ENCODE measurements at regions of chr5 and their contacts with region 1.

Region 1: DNA sequence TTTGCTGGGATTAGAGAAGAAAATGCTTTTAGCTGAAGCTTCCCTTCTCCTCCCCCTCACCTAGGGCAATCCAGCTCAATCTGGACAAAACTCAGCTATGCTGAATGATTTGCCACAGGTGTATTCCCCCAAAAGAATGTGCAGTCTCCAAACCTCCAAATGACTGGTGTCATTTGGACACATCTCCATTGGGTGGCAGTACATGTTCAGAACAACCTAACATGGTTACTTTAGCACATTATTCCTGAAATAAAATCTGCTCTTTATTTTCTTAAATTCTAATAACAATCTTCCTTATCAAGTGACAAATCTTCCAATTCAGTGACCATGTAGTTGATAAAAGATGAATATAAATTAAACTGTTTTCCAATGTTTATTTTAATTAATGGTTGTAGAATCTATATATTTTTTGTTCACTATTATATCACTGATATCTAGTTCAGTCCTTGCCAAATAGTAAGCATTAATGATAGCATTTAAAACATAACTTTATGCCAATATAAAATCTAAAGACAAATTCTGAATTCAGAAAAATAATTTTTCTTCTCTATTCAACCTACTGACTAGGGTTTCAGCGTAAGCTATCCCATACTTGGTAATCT is 61.3 kb upstream of the MOCS2 start:
- DNase-seq: peak; percentile 22
- ATAC-seq: peak; percentile 65
- H3K4me3 Mint-ChIP-seq: no peak overlapping the region
- H3K27ac Mint-ChIP-seq: no peak overlapping the region
- H3K4me1 Mint-ChIP-seq: no peaks in the 10 kb centered on the region
- H3K27me3 Mint-ChIP-seq: peaks cover 9% of the 10 kb centered on the region
- CTCF ChIP-seq: peak; percentile 60

Region 2: GRCh38 chr5:53211799-53212198 is 41.0 kb after region 1 on chr5:
- CTCF ChIA-PET with region 1: no interaction called
- POLR2A ChIA-PET with region 1: no interaction called
- intact Hi-C with region 1: no loop called
- DNase-seq: peak; percentile 20
- ATAC-seq: peak; percentile 56
- H3K4me3 Mint-ChIP-seq: no peak overlapping the region
- H3K27ac Mint-ChIP-seq: no peak overlapping the region
- H3K4me1 Mint-ChIP-seq: no peaks in the 10 kb centered on the region
- H3K27me3 Mint-ChIP-seq: peaks cover 9% of the 10 kb centered on the region
- CTCF ChIP-seq: no peak

Region 3: DNA sequence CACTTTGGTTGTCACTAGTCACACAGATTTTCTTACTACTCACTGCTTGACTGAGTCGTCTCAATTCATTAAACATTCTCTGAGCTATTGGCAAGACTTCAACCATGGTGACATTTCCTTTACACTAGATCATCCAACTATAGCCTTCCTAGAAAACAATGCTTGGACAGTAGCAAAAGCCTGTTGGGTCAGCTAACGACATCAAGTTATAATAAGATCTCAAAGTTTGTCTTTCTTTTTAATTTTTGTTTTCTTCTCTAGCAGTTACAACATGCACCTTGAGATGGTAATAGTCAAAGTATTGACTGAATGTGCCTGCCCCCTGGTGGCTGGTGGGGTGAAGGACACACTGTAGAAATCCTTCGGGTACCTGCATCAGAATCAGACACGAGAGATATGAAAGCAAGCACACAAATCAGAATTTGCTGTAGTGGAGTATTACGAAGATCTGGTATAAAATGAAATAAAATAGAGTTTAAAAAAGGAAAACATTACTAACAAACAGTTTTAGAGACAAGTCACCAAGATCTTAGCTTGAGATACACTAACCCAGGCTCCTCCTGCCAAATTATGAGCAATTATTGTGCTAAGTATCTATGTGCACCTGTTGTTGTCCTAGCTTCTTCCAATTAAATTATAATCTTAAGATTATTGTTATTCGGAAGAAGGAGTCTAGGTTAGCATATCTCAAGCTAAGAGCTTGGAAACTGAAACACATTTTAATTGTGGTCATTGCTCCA is 1058.4 kb after region 1 on chr5:
- CTCF ChIA-PET with region 1: interaction called, 13 read pairs
- POLR2A ChIA-PET with region 1: no interaction called
- intact Hi-C with region 1: no loop called
- DNase-seq: peak; percentile 87
- ATAC-seq: peak; percentile 93
- H3K4me3 Mint-ChIP-seq: no peak overlapping the region
- H3K27ac Mint-ChIP-seq: no peak overlapping the region
- H3K4me1 Mint-ChIP-seq: peaks cover 7% of the 10 kb centered on the region
- H3K27me3 Mint-ChIP-seq: no peaks in the 10 kb centered on the region
- CTCF ChIP-seq: peak; percentile 90